ENCODE measurements at regions of chr17 and their contacts with region 1.

Region 1: DNA sequence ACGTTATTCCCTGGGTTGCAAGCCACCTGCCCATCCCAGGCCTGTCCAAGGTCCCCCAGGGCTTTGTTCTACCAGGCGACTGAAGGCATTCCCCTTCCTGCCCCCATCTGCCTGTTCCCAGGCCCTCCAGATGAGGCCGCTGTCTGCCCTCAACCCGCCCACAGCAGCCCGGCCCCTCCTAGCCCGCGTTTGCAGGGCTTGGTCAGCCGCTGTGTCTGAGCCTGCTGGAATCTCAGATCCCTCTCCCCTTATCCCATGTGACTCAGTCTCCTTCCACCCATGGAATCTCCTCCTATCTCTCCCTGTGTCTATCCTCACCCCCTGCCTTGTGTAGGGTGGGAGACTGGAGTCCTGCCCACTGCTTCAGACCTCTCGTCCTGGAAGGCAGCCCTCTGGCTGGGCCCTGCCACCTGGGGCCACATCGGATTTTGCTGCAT is 186.0 kb upstream of the TNRC6C start:
- DNase-seq: no peak
- H3K4me3 ChIP-seq: no peak overlapping the region
- H3K27ac ChIP-seq: no peak overlapping the region
- H3K4me1 ChIP-seq: no peaks in the 10 kb centered on the region
- H3K27me3 ChIP-seq: no peaks in the 10 kb centered on the region
- CTCF ChIP-seq: peak in 1 of 3 experiments; percentile 31
- POLR2A ChIP-seq: no peak

Region 2: GRCh38 chr17:78013683-78014467 is 241.4 kb after region 1 on chr17:
- intact Hi-C with region 1: loop called (anchors 10 kb)
- DNase-seq: no peak
- H3K4me3 ChIP-seq: no peak overlapping the region
- H3K27ac ChIP-seq: no peak overlapping the region
- H3K4me1 ChIP-seq: no peaks in the 10 kb centered on the region
- H3K27me3 ChIP-seq: no peaks in the 10 kb centered on the region
- CTCF ChIP-seq: peak; percentile 69 to 77 (median 76)
- POLR2A ChIP-seq: no peak